ENCODE measurements at regions of chr1 and their contacts with region 1.

Region 1: DNA sequence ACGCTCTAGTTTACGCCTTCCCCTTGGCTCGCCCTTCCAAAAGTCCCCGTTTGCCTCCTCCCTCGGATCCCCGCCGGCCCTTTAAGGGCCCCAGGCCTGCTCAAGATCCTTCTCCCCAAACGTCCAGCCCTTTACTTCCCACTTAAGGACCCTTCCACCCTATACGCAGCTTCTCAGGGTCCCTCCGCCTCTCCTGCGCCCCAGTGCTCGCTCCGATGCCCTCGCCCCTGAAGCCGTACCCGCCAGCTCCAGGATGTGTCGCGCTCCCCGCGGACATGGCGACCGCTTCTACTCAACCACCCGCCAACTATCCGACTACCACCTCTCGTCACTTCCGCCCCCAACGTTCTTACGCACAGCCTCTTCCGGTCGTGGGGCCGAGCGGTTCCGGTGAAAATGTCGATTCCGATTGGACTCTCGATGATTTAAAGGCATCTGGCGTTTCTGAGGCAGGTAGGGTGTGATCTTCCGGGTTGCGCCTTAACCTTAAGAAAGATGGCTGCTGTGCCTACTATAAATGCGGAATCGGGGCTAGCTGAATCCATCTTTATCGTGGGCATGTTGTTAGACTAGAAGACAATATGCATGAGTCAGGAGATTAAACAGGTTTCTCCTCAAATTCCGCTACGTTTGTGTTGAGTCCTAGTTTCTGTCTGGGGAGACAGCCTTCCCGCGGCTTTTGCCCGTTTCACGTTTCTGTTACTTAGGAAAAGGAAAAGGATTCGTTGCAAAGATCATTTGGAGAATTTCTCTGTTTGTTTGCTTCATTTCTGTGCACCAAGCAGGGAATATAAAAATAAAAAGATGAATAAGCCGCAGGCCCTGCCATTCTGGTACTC is at the start of gene KHDC4:
- DNase-seq: peak; percentile 99
- H3K4me3 ChIP-seq: peak within 1 kb of the TSS; percentile 82 to 95 (median 86)
- H3K27ac ChIP-seq: peak within 1 kb of the TSS; percentile 97
- H3K4me1 ChIP-seq: peaks cover 41% of the 10 kb centered on the region
- H3K27me3 ChIP-seq: no peaks in the 10 kb centered on the region
- CTCF ChIP-seq: no peak
- total RNA-seq, gene KHDC4: 35.3 to 56.5 TPM

Region 2: GRCh38 chr1:156012051-156012817 is 77.9 kb after region 1 on chr1:
- CTCF ChIA-PET with region 1: no interaction called
- dilution Hi-C with region 1: no loop called
- in situ Hi-C with region 1: no loop called
- intact Hi-C with region 1: no loop called
- DNase-seq: no peak
- H3K4me3 ChIP-seq: no peak overlapping the region
- H3K27ac ChIP-seq: no peak overlapping the region
- H3K4me1 ChIP-seq: peaks cover under 1% of the 10 kb centered on the region
- H3K27me3 ChIP-seq: no peaks in the 10 kb centered on the region
- CTCF ChIP-seq: no peak

Region 3: DNA sequence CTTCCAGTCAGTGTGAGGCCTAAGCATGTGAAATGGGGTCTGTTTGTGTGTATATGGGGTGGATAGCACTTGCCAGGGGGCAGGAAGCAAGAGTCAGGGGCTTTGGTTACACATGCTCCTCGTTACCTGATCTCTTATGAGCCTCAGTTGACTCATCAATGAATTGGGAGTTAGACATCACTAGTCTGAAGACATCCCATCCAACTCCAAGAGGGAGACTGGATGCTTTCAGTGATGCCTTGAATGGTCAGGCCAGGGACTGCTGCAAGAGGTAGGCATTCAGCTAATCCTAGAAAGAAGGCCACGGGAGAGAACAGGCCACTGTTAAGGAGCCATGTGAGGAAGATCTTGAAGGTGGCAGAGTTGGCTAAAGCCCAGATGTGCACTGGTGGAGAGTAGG is 132.9 kb after region 1 on chr1:
- CTCF ChIA-PET with region 1: no interaction called
- dilution Hi-C with region 1: no loop called
- in situ Hi-C with region 1: no loop called
- intact Hi-C with region 1: loop called (anchors 1 kb)
- DNase-seq: no peak
- H3K4me3 ChIP-seq: no peak overlapping the region
- H3K27ac ChIP-seq: no peak overlapping the region
- H3K4me1 ChIP-seq: peaks cover 7% of the 10 kb centered on the region
- H3K27me3 ChIP-seq: no peaks in the 10 kb centered on the region
- CTCF ChIP-seq: no peak

Region 4: DNA sequence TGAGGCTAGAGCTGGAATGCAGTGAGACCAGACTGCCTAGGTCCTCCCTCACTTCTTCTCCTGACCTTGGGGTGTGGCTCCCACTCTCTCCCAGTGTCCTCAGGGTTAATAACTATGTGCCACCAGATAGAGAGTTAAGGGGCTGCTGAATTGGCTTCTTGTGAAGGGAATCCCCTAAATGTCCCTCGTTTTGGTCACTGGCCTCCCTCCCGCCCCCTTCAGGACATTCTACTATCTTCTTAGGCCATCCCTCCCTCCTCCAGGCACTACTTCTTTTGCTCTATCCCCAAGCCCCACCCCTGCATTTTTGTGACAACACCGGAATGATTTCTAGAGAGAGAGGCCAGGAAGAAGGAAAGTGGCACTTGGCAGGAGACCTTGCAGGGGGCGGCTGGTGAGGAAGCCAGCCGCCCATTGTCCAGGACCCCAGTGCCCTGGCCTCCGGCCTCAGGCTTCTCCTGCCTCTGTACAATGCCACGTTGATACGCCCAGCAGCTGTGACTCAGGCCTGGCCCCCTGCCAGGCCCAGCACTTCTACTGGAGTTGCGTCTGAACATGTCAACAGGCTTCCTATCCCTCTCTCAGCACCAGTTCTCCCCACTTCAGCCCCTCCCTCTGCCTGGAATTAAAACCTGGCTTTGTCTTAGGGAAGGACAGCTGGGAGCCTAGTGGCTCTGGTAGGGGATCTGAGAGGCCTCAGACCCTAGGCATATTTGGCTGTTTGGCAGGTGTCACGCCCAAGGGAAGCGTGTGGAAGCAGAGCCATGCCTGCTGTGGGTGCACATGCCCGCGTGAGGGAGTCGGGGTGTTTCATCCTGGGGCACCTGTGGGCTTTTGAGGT is 189.3 kb after region 1 on chr1:
- CTCF ChIA-PET with region 1: no interaction called
- dilution Hi-C with region 1: no loop called
- in situ Hi-C with region 1: no loop called
- intact Hi-C with region 1: loop called (anchors 5 kb)
- DNase-seq: peak; percentile 98
- H3K4me3 ChIP-seq: peak overlapping the region in 2 of 3 experiments; percentile 22 to 23
- H3K27ac ChIP-seq: peak overlapping the region; percentile 95
- H3K4me1 ChIP-seq: peaks cover 88% of the 10 kb centered on the region
- H3K27me3 ChIP-seq: no peaks in the 10 kb centered on the region
- CTCF ChIP-seq: peak in 1 of 2 donors; percentile 6

Region 5: DNA sequence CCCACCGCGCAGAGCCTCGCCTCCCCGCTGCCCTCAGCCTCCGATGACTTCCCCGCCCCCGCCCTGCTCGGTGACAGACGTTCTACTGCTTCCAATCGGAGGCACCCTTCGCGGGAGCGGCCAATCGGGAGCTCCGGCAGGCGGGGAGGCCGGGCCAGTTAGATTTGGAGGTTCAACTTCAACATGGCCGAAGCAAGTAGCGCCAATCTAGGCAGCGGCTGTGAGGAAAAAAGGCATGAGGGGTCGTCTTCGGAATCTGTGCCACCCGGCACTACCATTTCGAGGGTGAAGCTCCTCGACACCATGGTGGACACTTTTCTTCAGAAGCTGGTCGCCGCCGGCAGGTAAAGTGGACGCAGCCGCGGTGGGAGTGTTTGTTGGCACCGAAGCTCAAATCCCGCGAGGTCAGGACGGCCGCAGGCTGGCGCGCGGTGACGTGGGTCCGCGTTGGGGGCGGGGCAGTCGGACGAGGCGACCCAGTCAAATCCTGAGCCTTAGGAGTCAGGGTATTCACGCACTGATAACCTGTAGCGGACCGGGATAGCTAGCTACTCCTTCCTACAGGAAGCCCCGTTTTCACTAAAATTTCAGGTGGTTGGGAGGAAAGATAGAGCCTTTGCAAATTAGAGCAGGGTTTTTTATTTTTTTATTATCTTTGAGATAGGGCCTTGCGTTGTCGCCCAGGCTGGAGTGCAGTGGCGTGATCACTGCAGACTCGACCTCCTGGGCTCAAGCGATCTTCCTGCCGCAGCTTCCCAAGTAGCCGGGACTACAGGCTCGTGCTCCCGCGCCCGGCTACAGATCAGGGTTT is 278.7 kb after region 1 on chr1 and contains the start of gene PMF1:
- CTCF ChIA-PET with region 1: no interaction called
- dilution Hi-C with region 1: no loop called
- in situ Hi-C with region 1: no loop called
- intact Hi-C with region 1: loop called (anchors 10 kb)
- DNase-seq: peak; percentile 94
- H3K4me3 ChIP-seq: peak within 1 kb of the TSS; percentile 44 to 91 (median 53)
- H3K27ac ChIP-seq: peak within 1 kb of the TSS; percentile 87
- H3K4me1 ChIP-seq: peaks cover 24% of the 10 kb centered on the region
- H3K27me3 ChIP-seq: no peaks in the 10 kb centered on the region
- CTCF ChIP-seq: no peak
- total RNA-seq, gene PMF1: 23.8 to 33.2 TPM